ENCODE measurements at regions of chr1 and their contacts with region 1.

Region 1: GRCh38 chr1:209784265-209785169 is at the start of gene C1orf74:
- DNase-seq: peak; percentile 99
- H3K4me3 ChIP-seq: peak within 1 kb of the TSS; percentile 61 to 63 (median 62)
- H3K27ac ChIP-seq: peak within 1 kb of the TSS; percentile 81 to 90 (median 86)
- H3K4me1 ChIP-seq: peaks cover 0 to 28% (median 27%) of the 10 kb centered on the region in 4 donors
- H3K27me3 ChIP-seq: no peaks in the 10 kb centered on the region
- CTCF ChIP-seq: no peak
- EP300 ChIP-seq: peak in 1 of 4 donors; percentile 67
- POLR2A ChIP-seq: peak; percentile 42 to 61
- total RNA-seq, gene C1orf74: 0.28 to 1.4 (median 0.60) TPM

Region 2: GRCh38 chr1:209769171-209769904 is 15.2 kb before region 1 on chr1:
- intact Hi-C with region 1: loop called (anchors 2 kb)
- DNase-seq: peak; percentile 88
- H3K4me3 ChIP-seq: peak overlapping the region in 2 of 4 donors; percentile 10 to 13
- H3K27ac ChIP-seq: peak overlapping the region; percentile 64 to 81 (median 80)
- H3K4me1 ChIP-seq: peaks cover 0 to 37% (median 30%) of the 10 kb centered on the region in 4 donors
- H3K27me3 ChIP-seq: no peaks in the 10 kb centered on the region
- CTCF ChIP-seq: no peak
- EP300 ChIP-seq: peak; percentile 45 to 81 (median 64)
- POLR2A ChIP-seq: no peak

Region 3: DNA sequence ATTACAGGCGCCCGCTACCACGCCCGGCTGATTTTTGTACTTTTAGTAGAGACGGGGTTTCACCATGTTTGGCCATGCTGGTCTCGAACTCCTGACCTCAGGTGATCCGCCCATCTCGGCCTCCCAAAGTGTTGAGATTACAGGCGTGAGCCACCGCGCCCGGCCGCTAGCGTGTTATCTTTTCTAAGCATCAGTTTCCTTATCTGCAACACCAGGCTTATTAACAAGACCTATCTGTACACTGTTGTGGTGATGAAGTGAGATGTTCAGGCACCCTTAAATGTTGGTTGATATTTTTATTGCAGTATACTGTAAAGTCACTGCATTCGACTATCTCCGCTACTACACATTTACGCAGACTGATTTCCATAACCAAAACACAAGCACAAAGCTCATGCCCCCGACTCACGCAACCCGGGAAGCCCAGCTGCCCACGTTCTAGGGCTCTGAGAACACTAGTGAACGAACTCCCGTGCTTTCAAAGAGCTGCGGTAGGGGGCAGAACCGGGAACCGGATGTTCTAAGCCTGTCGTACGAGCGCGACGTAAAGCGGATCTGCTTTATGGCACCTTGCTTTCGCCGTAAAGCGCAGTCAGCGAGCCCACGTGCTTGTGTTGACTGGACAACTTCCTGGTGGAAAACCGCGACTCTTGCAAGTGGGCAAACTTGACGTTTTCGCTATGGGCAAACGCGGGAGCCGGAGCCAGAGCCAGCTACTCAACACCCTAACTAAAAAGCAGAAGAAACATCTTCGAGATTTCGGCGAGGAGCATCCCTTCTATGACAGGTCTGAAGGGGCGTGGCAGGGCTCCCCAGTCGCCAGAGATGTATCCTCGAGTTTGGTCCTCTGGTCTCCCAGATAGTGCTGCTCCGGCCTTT is 43.1 kb after region 1 on chr1 and contains the start of gene UTP25:
- intact Hi-C with region 1: loop called (anchors 1 kb)
- DNase-seq: peak; percentile 95
- H3K4me3 ChIP-seq: peak within 1 kb of the TSS; percentile 67 to 80 (median 74)
- H3K27ac ChIP-seq: peak within 1 kb of the TSS; percentile 70 to 80 (median 74)
- H3K4me1 ChIP-seq: peaks cover 0 to 13% (median 9%) of the 10 kb centered on the region in 4 donors
- H3K27me3 ChIP-seq: no peaks in the 10 kb centered on the region
- CTCF ChIP-seq: peak; percentile 41 to 70 (median 56)
- EP300 ChIP-seq: peak in 1 of 4 donors; percentile 49
- POLR2A ChIP-seq: no peak
- total RNA-seq, gene UTP25: 5.7 to 8.6 (median 6.9) TPM